Cardiac septum (tissue), 1 donor: ENCODE measurements at regions of chr5 and their contacts with region 1.

Region 1: DNA sequence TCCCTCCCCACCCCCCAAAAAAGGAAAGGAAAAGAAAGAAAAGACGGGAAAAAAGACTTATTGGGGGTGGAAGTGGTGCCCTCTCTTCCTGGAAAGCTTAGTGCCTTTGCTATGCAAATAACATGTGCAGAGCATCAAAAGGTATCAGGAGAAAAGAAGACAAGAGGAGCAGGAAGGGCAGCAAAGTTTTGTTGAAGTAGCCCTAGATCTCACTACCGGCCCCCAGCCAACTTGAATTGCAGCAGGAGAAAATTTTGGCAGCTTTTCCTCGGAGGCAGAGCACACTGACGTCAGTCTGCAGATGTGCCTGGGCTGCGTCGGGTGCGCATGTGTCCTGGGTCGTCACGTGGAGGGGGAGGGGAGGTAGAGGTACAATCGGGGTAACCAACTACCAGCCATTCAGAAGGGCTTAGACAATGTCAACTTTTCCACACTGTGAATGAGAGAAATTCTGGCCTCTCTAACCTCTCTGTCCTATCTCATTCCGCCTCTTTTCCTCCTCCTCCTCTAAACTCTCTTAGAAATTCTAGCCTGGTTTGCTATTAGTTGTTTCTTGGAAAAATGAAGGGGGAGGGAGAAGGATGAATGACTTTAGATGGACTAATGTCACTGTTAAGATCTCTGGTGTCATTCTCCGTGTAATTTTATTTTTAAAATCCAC is at the start of gene ADAMTS6:
- DNase-seq: peak; percentile 95
- total RNA-seq, gene ADAMTS6: 1.9 TPM

Region 2: GRCh38 chr5:64634997-64635686 is 846.6 kb before region 1 on chr5:
- intact Hi-C with region 1: loop called (anchors 5 kb)
- DNase-seq: no peak

Region 3: DNA sequence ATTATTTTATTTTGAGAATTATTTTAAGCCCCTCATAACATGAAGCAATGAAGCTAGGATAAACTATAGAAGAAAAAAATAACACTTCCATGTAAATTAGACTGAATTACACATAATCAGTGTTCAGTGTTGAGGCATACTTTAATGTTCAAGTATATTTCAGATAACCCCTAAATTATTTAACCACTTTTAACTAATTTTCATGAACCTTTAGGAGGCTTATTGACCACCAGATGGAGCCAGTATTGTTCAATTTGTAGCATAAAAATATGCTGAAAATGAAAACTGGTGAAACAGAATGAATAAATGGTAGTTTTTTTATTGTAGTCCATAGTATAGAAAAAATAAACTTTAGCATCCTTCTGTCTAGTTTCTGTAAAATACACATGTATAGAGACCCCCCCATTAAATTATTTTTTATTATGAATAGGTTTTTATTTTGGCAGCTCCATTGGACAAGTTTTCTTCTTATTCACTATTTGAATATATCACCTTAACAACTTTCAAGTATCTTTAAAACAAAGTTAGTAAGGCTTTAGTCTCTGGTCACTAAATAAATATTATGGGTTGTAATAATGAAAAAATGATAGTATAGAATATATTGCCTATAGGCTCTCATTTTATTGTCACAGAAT is 522.9 kb before region 1 on chr5:
- intact Hi-C with region 1: loop called (anchors 5 kb)
- DNase-seq: no peak

Region 4: DNA sequence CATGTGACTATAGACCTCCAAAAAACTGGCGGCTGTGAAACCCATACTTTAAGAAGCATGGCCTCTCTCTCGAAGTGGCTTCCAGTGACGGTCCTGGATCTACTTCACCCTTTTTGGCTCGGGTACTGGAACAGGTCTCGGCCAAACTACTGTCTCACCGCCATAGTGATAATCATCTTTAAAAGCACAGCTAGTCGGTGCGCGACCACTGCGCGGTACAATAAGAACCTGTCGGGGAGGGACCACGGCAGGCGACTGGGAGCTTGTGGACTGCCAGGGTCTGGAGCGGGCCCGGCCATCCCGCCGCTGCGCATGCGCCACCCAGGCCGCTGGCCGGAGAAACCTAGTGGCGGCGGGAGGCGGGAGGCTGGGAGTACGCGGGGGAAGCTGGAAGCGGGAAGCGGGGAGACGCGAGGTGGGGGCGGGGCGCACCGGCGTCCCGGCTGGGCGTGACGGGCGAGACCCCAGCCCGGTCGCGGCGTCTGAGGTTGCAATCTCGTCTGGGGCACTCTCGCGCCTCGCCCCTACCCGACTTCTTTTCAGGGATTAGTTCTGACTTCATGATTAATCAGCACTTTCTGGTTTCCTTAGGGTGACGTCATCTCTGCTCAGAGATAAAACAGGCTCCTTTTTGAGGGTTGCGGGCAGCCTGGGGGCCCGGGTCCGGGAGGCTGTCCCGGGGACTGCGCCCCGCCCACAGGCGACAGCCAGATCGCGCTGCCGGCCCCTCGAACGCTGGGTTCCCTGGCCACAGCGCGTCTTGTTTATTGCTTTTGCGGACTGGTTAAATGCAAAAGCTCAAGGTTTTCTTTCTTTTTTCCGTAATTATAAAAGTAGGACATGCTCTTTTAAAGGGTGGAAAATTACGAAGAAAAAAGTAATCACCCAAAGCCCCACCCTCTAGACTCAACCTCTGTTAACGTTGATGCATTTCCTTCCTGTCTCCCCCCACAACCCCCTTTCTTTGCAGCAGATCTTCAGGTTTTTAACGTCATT is 446.3 kb before region 1 on chr5:
- intact Hi-C with region 1: loop called (anchors 5 kb)
- DNase-seq: peak; percentile 93

Region 5: GRCh38 chr5:65213921-65214525 is 267.7 kb before region 1 on chr5:
- intact Hi-C with region 1: loop called (anchors 5 kb)
- DNase-seq: no peak

Region 6: DNA sequence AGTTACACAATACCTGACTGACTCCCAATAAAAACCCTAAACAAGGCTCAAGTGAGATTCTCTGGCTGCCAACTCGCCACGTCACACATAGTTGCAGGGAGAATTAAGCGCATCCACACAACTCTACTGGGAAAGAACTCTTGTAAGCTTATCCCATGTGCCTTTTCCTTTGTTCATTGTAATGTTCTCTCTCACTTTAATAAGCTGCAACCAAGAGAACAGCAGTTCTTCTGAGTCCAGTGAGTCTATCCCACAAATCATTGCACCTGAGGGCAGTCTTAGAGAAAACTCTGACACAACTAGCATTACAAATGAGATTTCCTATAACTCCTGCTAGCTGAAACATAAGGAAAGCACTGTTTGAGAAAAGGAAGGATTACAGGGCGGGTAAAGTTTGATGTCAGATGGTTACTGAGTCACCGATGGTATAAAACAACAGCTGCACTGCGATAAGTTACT is 53.8 kb after region 1 on chr5:
- intact Hi-C with region 1: no loop called
- DNase-seq: no peak